Activated T-helper 1 cell treated with anti-CD3 and anti-CD28 coated beads, Interleukin-12 subunit alpha, Interleukin-12 subunit beta, Interleukin-2, Interleukin-4 antibody, amounts not matched to agents 30 ng/mL and 10 ng/mL and 1 ng/mL, durations not matched to agents 14 hours and 24 hours and 36 hours (primary cell): ENCODE measurements at regions of chrX and their contacts with region 1.

Region 1: DNA sequence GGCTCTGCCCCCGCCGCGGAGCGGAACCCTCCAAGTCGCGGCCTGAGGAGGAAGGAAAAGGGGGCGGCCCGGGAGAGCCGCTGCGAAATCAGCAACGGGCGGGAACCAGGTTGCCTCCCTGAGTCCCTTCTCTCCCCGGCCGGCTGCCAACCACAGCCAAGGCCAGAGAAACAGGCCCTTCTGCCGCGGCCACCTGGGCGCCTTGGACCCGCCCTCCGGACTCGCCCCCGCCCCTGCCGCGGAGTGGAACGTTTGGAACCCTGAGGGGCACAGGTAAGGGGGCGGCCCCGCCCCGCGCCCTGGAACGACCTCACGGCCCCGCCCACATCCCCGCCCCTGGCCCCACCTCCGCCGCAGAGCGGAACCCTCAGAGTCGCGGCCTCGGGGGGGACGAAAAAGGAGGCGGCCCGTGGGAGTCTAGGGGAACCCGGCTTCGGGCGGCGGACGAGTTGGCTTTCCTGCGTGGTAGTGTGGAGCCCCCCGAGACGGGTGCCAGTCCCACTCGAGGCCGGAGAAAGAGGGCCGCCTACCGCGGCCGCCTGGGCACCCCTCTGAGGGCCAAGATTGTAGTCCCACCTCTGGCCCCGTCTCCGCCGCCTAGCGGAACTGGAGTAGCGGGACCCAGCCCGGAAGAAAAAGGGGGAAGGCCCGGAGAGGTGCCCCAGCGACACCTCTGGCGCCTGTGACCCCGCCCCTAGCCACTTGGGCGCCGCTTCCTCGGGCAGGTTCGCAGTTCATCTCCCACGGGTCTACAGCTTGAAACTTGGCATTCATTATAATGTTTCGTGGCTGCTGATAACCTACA is 669 bp upstream of the PHKA2 start:
- DNase-seq: peak; percentile 74
- H3K4me3 Mint-ChIP-seq: peak overlapping the region; percentile 85
- H3K27ac Mint-ChIP-seq: peak overlapping the region; percentile 87
- H3K4me1 Mint-ChIP-seq: peaks cover 6% of the 10 kb centered on the region
- H3K27me3 Mint-ChIP-seq: no peaks in the 10 kb centered on the region

Region 2: GRCh38 chrX:18674788-18675735 is 309.5 kb before region 1 on chrX:
- intact Hi-C with region 1: loop called (anchors 2 kb)
- DNase-seq: peak; percentile 75
- H3K4me3 Mint-ChIP-seq: peak overlapping the region; percentile 74
- H3K27ac Mint-ChIP-seq: peak overlapping the region; percentile 52
- H3K4me1 Mint-ChIP-seq: no peaks in the 10 kb centered on the region
- H3K27me3 Mint-ChIP-seq: no peaks in the 10 kb centered on the region

Region 3: DNA sequence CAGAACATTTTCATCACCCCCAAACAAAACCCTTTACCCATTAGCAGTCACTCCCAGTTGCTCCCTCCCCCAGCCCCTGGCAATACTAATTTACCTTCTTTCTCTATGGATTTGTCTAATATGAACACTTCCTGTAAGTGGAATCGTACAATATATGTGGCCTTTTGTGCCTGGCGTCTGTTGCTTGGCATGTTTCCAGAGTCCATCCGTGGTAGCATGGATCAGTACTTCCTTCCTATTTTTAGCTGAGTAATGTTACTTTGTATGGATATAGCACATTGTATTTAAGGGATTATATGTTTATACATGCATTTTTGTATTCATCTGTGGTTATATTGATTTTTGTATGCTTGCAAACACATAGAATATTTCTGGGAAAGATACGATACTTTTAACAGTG is 228.9 kb before region 1 on chrX:
- intact Hi-C with region 1: no loop called
- DNase-seq: no peak
- H3K4me3 Mint-ChIP-seq: no peak overlapping the region
- H3K27ac Mint-ChIP-seq: no peak overlapping the region
- H3K4me1 Mint-ChIP-seq: no peaks in the 10 kb centered on the region
- H3K27me3 Mint-ChIP-seq: no peaks in the 10 kb centered on the region

Region 4: GRCh38 chrX:18938710-18939109 is 45.9 kb before region 1 on chrX:
- intact Hi-C with region 1: no loop called
- DNase-seq: no peak
- H3K4me3 Mint-ChIP-seq: no peak overlapping the region
- H3K27ac Mint-ChIP-seq: no peak overlapping the region
- H3K4me1 Mint-ChIP-seq: no peaks in the 10 kb centered on the region
- H3K27me3 Mint-ChIP-seq: no peaks in the 10 kb centered on the region

Region 5: GRCh38 chrX:18955676-18956075 is 28.9 kb before region 1 on chrX:
- intact Hi-C with region 1: loop called (anchors 2 kb)
- DNase-seq: no peak
- H3K4me3 Mint-ChIP-seq: no peak overlapping the region
- H3K27ac Mint-ChIP-seq: no peak overlapping the region
- H3K4me1 Mint-ChIP-seq: peaks cover 14% of the 10 kb centered on the region
- H3K27me3 Mint-ChIP-seq: no peaks in the 10 kb centered on the region

Region 6: GRCh38 chrX:18994738-18995137 is 10.2 kb after region 1 on chrX:
- intact Hi-C with region 1: no loop called
- DNase-seq: no peak
- H3K4me3 Mint-ChIP-seq: no peak overlapping the region
- H3K27ac Mint-ChIP-seq: no peak overlapping the region
- H3K4me1 Mint-ChIP-seq: no peaks in the 10 kb centered on the region
- H3K27me3 Mint-ChIP-seq: no peaks in the 10 kb centered on the region

Region 7: GRCh38 chrX:19343535-19344408 is 359.2 kb after region 1 on chrX and contains the start of gene PDHA1:
- intact Hi-C with region 1: loop called (anchors 1 kb)
- DNase-seq: peak; percentile 90
- H3K4me3 Mint-ChIP-seq: peak within 1 kb of the TSS; percentile 90
- H3K27ac Mint-ChIP-seq: peak within 1 kb of the TSS; percentile 90
- H3K4me1 Mint-ChIP-seq: peaks cover 13% of the 10 kb centered on the region
- H3K27me3 Mint-ChIP-seq: peaks cover 2% of the 10 kb centered on the region
- total RNA-seq, gene PDHA1: 213 and 218 TPM in 2 replicates